CD8-positive, alpha-beta T cell (primary cell): ENCODE measurements at regions of chr6 and their contacts with region 1.

Region 1: GRCh38 chr6:144482142-144482541 is 197.0 kb downstream of the UTRN start:
- DNase-seq: peak; percentile 49 to 80 (median 75)
- ATAC-seq: peak; percentile 77
- H3K4me3 ChIP-seq: no peak overlapping the region
- H3K4me3 Mint-ChIP-seq: no peak overlapping the region
- H3K27ac ChIP-seq: no peak overlapping the region
- H3K27ac Mint-ChIP-seq: no peak overlapping the region
- H3K4me1 ChIP-seq: no peaks in the 10 kb centered on the region
- H3K4me1 Mint-ChIP-seq: peaks cover 3% of the 10 kb centered on the region
- H3K27me3 ChIP-seq: no peaks in the 10 kb centered on the region
- H3K27me3 Mint-ChIP-seq: no peaks in the 10 kb centered on the region
- CTCF ChIP-seq: peak; percentile 80

Region 2: DNA sequence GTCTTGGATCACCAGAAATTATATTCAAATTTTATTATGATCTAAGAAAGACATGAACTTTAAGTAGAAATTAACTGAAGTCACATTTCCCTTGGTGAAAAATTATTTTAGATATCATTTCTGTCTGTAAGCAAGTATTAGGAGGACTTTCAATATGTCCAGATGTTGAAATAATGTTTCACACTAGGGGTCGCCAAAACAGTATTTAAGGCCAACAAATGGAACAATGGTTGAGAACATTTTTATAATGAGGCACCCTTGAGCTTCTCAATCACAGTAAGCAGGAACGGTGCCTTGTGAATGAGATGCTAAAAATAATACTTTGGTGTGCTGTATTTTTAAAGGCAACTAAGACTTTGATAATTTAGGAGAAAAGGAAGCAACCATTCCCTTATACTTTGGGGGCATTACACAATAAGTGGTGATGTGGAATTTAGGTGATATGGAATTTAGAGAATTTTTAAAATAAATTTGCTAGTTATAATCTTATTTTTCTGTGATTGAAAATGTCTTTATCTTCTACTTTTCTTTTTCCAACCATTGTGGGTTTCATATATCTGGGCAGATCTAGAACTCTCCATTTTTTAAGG is 377.1 kb before region 1 on chr6:
- CTCF ChIA-PET with region 1: interaction called, 14 read pairs
- POLR2A ChIA-PET with region 1: interaction called, 4 read pairs
- intact Hi-C with region 1: loop called (anchors 1 kb)
- DNase-seq: peak in 5 of 9 experiments; percentile 16 to 83 (median 45)
- ATAC-seq: peak; percentile 78
- H3K4me3 ChIP-seq: no peak overlapping the region
- H3K4me3 Mint-ChIP-seq: no peak overlapping the region
- H3K27ac ChIP-seq: no peak overlapping the region
- H3K27ac Mint-ChIP-seq: no peak overlapping the region
- H3K4me1 ChIP-seq: no peaks in the 10 kb centered on the region
- H3K4me1 Mint-ChIP-seq: peaks cover 2% of the 10 kb centered on the region
- H3K27me3 ChIP-seq: no peaks in the 10 kb centered on the region
- H3K27me3 Mint-ChIP-seq: no peaks in the 10 kb centered on the region
- CTCF ChIP-seq: peak; percentile 79

Region 3: DNA sequence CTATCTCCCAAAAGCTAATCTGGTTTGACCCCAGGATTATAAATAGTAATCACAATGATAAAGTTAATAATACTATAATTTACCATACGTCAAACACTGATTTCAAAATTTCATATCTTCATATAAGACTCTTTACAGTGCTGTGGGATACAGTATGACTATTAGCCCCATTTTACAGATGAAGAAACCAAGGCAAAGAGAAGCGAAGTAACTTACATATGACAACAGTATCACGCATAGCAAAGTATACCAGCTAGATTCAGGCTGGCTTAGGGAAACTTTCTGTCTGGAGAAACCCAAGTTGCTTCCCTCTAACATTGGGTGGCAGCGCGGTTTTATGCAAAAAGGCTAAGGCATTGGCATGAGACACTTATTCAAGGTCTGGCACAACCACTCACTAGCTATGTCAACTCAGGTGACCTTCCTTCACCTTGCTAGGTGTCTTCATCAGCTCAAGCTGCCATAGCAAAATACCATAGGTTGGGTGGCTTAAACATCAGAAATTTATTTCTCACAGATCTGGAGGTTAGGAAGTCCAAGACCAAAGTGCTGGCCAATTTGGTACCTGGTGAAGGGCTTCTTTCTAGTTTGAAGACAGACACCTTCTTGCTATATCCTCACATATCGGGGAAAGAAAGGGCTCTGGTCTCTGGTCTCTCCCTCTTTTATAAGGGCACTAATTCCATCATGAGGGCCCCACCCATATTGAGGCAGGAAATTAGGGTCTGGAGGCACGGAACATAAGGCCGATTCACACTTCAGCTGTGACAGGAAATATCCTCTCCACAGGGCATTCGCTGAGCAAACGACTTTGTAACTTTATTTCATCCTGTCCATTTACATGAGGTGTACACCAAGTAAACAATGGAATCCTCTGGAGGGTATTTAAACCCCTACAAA is 219.4 kb before region 1 on chr6:
- CTCF ChIA-PET with region 1: interaction called, 8 read pairs
- POLR2A ChIA-PET with region 1: no interaction called
- intact Hi-C with region 1: loop called (anchors 1 to 2 kb)
- DNase-seq: peak in 5 of 9 experiments; percentile 10 to 57 (median 40)
- ATAC-seq: no peak
- H3K4me3 ChIP-seq: no peak overlapping the region
- H3K4me3 Mint-ChIP-seq: no peak overlapping the region
- H3K27ac ChIP-seq: no peak overlapping the region
- H3K27ac Mint-ChIP-seq: no peak overlapping the region
- H3K4me1 ChIP-seq: no peaks in the 10 kb centered on the region
- H3K4me1 Mint-ChIP-seq: no peaks in the 10 kb centered on the region
- H3K27me3 ChIP-seq: no peaks in the 10 kb centered on the region
- H3K27me3 Mint-ChIP-seq: no peaks in the 10 kb centered on the region
- CTCF ChIP-seq: no peak

Region 4: DNA sequence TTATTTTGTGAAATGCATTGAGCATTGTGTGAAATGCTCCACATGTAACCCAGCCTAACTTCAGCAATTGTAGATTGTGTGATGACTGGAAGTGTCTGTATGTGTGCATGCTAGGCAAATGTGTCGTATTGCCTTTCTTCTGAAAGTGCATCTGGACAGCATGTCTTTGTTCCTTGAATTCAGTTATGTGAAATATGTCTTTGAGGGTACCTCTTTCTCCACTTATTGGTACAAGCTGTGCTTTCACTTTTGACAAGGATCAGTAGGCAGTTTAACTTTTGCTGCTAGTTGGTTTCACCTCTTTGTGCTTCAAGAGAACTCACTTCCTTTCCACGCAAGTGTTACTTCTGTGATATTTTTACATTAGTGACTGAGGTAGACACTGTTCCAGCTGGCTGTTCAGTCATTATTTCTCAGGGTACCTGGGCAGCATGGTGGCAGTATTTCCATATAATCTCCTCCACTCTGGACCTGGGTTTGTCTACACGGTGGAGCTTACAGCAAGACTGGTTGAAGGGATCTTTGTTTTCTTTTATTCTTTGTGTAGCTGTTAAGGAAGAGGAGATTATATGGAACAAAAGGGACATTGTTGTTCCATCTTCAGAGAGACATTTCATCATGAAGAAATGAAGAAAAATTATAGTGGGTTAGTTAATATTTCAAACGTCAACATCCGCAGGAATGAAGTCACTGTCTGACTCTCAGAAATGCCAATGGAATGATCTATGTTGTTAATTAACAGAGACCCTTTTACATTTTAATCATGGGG is 21.6 kb before region 1 on chr6:
- CTCF ChIA-PET with region 1: interaction called, 3 read pairs
- POLR2A ChIA-PET with region 1: no interaction called
- intact Hi-C with region 1: loop called in 1 of 2 experiments (anchors 1 kb)
- DNase-seq: peak in 2 of 9 experiments; percentile 29 to 58
- ATAC-seq: peak; percentile 66
- H3K4me3 ChIP-seq: no peak overlapping the region
- H3K4me3 Mint-ChIP-seq: peak overlapping the region; percentile 42
- H3K27ac ChIP-seq: peak overlapping the region; percentile 11 to 63
- H3K27ac Mint-ChIP-seq: peak overlapping the region; percentile 93
- H3K4me1 ChIP-seq: peaks cover 16% of the 10 kb centered on the region
- H3K4me1 Mint-ChIP-seq: peaks cover 26% of the 10 kb centered on the region
- H3K27me3 ChIP-seq: no peaks in the 10 kb centered on the region
- H3K27me3 Mint-ChIP-seq: no peaks in the 10 kb centered on the region
- CTCF ChIP-seq: no peak

Region 5: DNA sequence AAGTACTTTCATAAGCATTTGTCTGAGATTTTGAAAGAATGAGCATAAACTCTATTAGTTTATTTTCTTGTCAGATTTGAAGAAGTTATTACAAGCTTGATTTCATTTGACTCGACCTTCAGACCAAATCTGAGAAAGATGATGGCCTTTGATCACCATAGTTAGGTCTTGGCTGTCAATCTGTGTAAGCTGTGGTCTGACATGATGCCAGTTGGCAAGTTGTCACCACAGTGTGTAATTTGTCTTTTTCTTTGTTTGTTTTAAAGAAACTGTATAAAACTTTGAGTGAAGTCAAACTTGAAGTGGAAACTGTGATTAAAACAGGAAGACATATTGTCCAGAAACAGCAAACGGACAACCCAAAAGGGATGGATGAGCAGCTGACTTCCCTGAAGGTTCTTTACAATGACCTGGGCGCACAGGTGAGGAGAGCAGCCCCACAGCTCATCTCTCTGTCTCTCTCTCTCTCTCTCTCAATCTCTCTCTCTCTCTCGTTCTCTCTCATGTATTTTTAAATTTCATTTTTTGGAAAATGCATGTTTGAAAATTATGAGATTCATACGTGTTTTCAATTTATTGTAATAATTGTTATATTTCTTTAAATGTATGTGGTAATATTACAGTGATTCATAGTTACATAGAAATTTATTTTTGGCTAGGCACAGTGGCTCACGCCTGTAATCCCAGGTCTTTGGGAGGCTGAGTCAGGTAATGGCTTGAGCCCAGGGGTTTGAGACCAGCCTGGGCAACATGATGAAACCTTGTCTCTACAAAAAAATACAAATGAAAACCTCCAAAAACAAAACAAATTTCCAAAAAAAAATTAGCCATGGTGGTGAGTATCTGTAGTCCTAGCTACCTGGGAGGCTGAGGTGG is 11.1 kb after region 1 on chr6:
- CTCF ChIA-PET with region 1: interaction called, 13 read pairs
- POLR2A ChIA-PET with region 1: no interaction called
- intact Hi-C with region 1: no loop called
- DNase-seq: no peak
- ATAC-seq: no peak
- H3K4me3 ChIP-seq: no peak overlapping the region
- H3K4me3 Mint-ChIP-seq: no peak overlapping the region
- H3K27ac ChIP-seq: no peak overlapping the region
- H3K27ac Mint-ChIP-seq: no peak overlapping the region
- H3K4me1 ChIP-seq: no peaks in the 10 kb centered on the region
- H3K4me1 Mint-ChIP-seq: peaks cover 10% of the 10 kb centered on the region
- H3K27me3 ChIP-seq: no peaks in the 10 kb centered on the region
- H3K27me3 Mint-ChIP-seq: no peaks in the 10 kb centered on the region
- CTCF ChIP-seq: no peak

Region 6: DNA sequence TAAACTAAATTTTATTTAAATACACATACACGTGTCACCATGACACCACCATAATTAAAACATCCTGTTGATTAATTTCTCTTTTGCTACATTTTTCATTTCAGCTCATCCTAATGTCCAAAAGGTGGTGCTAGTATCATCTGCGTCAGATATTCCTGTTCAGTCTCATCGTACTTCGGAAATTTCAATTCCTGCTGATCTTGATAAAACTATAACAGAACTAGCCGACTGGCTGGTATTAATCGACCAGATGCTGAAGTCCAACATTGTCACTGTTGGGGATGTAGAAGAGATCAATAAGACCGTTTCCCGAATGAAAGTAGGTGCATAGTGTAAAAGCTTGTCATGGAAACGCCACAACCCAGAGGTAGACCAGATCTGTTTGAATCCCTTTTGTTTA is 66.4 kb after region 1 on chr6:
- CTCF ChIA-PET with region 1: no interaction called
- POLR2A ChIA-PET with region 1: no interaction called
- intact Hi-C with region 1: no loop called
- DNase-seq: no peak
- ATAC-seq: no peak
- H3K4me3 ChIP-seq: no peak overlapping the region
- H3K4me3 Mint-ChIP-seq: no peak overlapping the region
- H3K27ac ChIP-seq: no peak overlapping the region
- H3K27ac Mint-ChIP-seq: no peak overlapping the region
- H3K4me1 ChIP-seq: no peaks in the 10 kb centered on the region
- H3K4me1 Mint-ChIP-seq: peaks cover under 1% of the 10 kb centered on the region
- H3K27me3 ChIP-seq: no peaks in the 10 kb centered on the region
- H3K27me3 Mint-ChIP-seq: no peaks in the 10 kb centered on the region
- CTCF ChIP-seq: no peak